ENCODE measurements at regions of chr17 and their contacts with region 1.

Region 1: DNA sequence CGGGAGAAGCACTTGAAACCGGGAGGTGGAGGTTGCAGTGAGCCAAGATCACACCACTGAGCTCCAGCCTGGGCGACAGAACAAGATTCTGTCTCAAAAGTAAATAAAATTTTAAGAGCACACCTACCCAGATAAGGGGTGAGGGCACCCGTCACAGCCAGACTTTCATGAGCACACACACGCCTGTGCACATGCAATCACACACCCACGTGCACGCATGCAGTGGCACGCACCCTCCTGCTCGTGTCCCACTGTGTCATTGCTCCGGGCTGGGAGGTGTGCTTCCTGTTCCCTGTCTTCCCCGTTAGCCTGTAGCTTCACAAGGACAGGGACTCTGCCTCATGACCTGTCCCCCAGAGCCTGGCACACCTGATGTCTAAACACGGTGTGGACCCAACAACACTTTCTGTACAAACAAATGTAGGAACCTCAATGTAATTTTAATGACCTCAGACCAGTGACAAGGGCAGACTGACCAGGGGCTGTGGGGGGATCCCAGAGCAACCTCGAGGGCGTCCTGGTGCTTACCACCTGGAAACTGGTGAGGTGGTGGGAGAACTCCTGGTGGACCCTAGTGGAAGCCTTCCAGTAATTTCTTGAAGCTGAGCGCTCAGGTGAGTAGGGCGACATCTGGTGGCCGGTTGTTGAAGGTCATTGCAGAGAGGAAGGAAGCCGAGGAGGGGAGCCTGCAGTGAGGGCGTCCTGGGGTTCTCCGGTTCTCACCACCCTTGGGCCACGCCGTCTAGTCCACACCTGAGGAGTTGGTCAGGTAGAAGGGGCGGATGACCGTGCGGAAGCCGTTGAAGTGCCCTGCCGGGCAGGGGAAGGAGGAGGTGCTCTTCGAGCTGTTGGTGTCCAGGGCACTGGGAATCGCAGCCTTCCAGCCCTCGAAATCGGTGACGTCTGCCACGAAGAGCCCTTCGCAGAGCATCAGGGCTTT is 8.6 kb downstream of the LGALS3BP start:
- DNase-seq: peak; percentile 85
- H3K4me3 ChIP-seq: no peak overlapping the region
- H3K27ac ChIP-seq: no peak overlapping the region
- H3K4me1 ChIP-seq: peaks cover 8% of the 10 kb centered on the region
- CTCF ChIP-seq: peak; percentile 99

Region 2: DNA sequence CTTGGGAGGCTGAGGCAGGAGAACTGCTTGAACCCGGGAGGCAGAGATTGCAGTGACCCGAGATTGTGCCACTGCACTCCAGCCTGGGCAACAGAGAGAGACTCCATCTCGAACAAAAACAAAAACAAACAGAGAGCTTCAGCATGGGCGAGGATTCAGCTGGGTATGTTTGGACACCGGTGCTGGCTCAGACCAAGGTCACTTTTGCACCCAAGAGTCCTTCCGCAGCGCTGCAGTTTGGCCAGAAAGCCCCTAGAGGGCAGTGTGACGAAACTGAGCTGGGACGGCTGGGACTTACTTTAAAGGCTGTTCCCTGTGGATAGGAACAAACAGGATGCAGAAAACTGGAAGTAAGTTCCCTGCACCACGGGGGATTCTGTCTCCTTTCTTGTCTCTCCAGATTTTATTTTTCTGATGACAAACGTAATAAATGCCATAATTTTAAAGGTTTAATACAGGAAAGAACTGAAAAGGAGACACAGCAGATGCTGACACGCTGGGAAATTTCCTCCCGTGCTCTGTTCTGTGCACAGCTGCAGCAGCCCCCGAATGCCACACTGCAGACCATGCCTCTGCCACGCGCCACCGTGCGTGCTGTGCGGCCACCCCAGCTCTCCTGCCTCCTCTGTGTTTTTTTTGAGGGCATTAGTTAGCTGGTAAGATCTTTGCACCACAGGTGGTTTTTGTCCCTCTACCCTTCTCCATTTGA is 105.3 kb before region 1 on chr17:
- CTCF ChIA-PET with region 1: interaction called, 4 read pairs
- POLR2A ChIA-PET with region 1: no interaction called
- intact Hi-C with region 1: loop called (anchors 1 kb)
- DNase-seq: peak; percentile 71
- H3K4me3 ChIP-seq: no peak overlapping the region
- H3K27ac ChIP-seq: no peak overlapping the region
- H3K4me1 ChIP-seq: no peaks in the 10 kb centered on the region
- CTCF ChIP-seq: peak; percentile 96

Region 3: DNA sequence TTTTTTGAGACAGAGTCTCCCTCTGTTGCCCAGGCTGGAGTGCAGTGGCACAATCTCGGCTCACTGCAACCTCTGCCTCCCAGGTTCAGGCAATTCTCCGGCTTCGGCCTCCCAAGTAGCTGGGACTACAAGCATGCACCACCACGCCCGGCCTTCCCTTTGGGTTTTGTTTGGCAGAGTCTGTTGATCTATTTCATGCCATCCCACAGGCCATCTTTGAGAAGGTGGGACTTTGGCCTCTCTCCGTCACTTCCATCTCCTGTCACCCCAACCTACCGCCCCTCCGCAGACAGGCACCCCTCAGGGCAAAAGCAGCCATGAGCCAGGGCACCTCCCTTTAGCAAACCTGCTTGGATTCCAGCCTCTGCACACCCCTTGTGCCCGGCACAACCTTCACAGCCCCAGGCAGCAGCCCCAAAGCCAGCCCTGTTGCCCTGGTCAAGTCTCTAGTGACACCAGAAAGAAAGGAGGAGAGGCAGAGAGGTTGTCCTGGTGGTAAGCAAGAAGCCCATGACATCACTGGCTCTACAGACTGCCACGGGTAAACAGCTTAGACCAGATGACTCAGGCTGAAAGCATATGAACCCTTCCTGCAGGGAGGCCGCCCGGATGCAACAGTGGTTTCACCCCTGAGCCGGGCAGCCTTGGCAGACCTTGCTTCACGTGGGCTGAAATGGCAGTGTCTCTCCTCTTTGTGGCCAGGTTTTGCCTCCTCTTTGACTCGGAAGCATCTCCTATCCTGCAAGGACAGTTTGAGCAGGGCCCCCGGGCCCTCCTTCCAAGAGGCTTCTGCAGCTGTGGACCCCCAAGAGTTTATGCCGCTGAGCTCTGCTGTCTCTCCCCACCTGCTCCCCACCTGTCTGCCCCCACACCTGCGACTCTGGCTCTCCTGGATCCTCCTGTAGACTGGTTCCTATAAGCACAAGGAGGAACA is 37.8 kb before region 1 on chr17:
- CTCF ChIA-PET with region 1: no interaction called
- POLR2A ChIA-PET with region 1: no interaction called
- intact Hi-C with region 1: no loop called
- DNase-seq: peak; percentile 23
- H3K4me3 ChIP-seq: no peak overlapping the region
- H3K27ac ChIP-seq: no peak overlapping the region
- H3K4me1 ChIP-seq: no peaks in the 10 kb centered on the region
- CTCF ChIP-seq: no peak

Measured in OCI-LY7 (cell line).